ENCODE measurements at regions of chr5 and their contacts with region 1.

Region 1: GRCh38 chr5:127290019-127290945 is at the start of gene MEGF10:
- DNase-seq: peak; percentile 42
- H3K4me3 ChIP-seq: peak within 1 kb of the TSS in 3 of 4 donors; percentile 14 to 47 (median 21)
- H3K27ac ChIP-seq: no peak within 1 kb of the TSS
- H3K4me1 ChIP-seq: peaks cover 0 to 14% (median 11%) of the 10 kb centered on the region in 4 donors
- H3K27me3 ChIP-seq: peaks cover 33% of the 10 kb centered on the region
- CTCF ChIP-seq: peak; percentile 43 to 59 (median 51)
- EP300 ChIP-seq: no peak
- POLR2A ChIP-seq: no peak
- total RNA-seq, gene MEGF10: 0.68 to 3.0 (median 2.9) TPM in 3 of 4 donors, not detected in the other

Region 2: GRCh38 chr5:127176769-127177168 is 113.5 kb before region 1 on chr5:
- in situ Hi-C with region 1: no loop called
- intact Hi-C with region 1: no loop called
- DNase-seq: no peak
- H3K4me3 ChIP-seq: no peak overlapping the region
- H3K27ac ChIP-seq: no peak overlapping the region
- H3K4me1 ChIP-seq: no peaks in the 10 kb centered on the region
- H3K27me3 ChIP-seq: no peaks in the 10 kb centered on the region
- CTCF ChIP-seq: no peak
- EP300 ChIP-seq: no peak
- POLR2A ChIP-seq: no peak

Region 3: DNA sequence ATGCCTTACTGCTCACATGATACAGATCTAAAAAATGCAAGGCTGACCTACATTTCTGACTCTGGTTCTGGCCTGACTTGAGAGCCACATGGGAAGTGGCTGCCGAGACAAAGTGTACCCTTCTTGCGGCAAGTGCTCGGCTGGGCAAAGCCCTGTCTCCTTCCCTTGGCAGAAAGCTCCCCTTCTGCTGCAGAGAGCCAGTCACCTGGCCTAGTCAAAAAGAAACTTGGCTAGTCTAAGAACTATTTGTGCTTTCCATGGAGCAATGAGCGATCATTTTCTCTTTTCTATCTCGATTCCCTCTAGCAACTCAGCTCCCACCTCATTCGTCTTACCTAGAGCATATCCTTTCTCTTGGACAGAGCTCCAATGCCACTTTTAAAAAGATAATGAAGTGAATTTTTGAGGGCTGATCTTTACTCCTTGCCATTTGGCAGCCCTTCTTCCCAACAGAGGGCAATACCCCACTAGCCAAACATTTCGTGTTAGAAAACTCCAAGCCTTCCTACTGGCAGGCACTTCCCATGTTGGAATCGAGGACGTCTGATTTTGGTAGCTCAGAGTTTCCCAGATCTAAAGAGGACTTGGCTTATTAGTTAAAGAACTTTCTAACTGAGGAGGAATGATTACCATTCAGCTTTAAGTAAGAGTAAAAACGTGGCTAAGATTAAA is 119.1 kb after region 1 on chr5:
- in situ Hi-C with region 1: no loop called
- intact Hi-C with region 1: loop called (anchors 2 kb)
- DNase-seq: no peak
- H3K4me3 ChIP-seq: no peak overlapping the region
- H3K27ac ChIP-seq: no peak overlapping the region
- H3K4me1 ChIP-seq: no peaks in the 10 kb centered on the region
- H3K27me3 ChIP-seq: no peaks in the 10 kb centered on the region
- CTCF ChIP-seq: no peak
- EP300 ChIP-seq: no peak
- POLR2A ChIP-seq: no peak

Region 4: DNA sequence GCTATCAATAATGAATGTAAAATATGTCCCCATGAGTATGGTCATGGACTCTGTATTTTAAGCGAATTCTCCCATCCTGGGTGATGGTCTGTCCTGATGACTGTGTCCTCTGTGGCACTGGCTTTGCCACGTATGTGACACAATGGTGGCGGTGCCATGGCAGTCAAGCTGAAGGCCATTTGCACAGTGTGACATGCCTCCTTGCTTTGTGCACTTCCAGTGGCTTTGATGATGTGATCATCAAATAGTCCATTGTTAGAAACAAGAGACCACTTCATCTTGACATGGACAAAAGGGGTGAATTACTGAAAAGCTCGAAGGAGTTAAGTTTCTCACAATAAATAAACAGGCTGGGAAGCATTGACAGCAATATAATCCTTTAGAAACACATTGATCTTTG is 196.2 kb after region 1 on chr5:
- in situ Hi-C with region 1: loop called in 1 of 4 experiments (anchors 10 kb)
- intact Hi-C with region 1: no loop called
- DNase-seq: no peak
- H3K4me3 ChIP-seq: no peak overlapping the region
- H3K27ac ChIP-seq: no peak overlapping the region
- H3K4me1 ChIP-seq: peaks cover 0 to 5% (median 0%) of the 10 kb centered on the region in 4 donors
- H3K27me3 ChIP-seq: no peaks in the 10 kb centered on the region
- CTCF ChIP-seq: no peak
- EP300 ChIP-seq: no peak
- POLR2A ChIP-seq: no peak

Measured in transverse colon (tissue), 4 donors.